ENCODE measurements at regions of chr20 and their contacts with region 1.

Region 1: DNA sequence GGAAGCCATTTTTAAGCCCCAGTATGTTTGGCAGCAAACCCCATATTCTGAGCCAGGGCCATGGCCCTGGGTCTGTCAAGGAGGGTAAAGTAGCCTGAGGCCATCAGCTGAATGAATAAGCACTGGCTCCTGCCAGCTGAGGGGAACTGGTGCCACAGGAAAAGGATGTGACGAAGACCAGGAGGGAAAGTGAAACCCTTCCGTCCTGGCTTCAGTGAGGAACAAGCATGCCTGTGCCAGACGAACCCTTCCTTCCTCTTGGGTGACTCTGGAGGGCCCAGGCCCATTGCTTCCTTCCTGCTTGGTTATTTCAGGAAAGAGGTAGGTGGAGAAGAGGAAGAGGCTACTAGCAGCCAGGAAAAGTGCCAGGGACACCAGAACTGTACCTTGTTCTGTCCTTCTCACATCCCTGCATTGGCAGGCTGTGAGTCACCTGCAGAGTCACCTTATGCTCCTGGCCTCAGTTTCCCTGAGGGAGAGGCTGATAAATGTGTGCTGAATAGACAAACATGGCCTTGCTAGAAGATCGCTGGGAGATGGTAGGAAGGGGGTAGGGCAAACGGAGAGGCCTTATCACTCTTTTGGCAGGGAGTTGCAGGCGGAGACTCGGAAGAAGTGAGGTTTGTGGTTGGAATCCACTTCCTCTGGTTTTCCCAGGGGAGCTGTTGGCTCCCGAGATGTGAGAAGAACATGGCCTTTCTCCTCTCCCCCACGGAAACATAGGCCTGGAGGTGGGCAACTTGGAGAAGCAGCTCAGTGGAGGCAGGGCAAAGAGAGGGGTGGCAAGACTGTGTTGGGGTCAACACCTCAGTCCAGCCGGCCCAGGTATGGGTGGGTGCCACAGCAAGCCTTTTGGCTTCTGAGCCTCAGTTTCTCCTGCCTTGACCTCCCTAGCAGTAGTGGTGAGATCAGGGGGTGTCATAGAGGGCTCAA is 37.4 kb downstream of the COX4I2 start:
- DNase-seq: peak; percentile 58 to 88
- ATAC-seq: peak; percentile 80 to 87 (median 82)
- H3K4me3 ChIP-seq: peak overlapping the region; percentile 58
- H3K4me3 Mint-ChIP-seq: peak overlapping the region; percentile 95
- H3K27ac ChIP-seq: peak overlapping the region; percentile 90
- H3K27ac Mint-ChIP-seq: peak overlapping the region; percentile 89 to 100
- H3K4me1 ChIP-seq: peaks cover 96% of the 10 kb centered on the region
- H3K4me1 Mint-ChIP-seq: peaks cover 84 to 88% of the 10 kb centered on the region in 2 donors
- H3K27me3 ChIP-seq: no peaks in the 10 kb centered on the region
- H3K27me3 Mint-ChIP-seq: no peaks in the 10 kb centered on the region
- CTCF ChIP-seq: no peak

Region 2: DNA sequence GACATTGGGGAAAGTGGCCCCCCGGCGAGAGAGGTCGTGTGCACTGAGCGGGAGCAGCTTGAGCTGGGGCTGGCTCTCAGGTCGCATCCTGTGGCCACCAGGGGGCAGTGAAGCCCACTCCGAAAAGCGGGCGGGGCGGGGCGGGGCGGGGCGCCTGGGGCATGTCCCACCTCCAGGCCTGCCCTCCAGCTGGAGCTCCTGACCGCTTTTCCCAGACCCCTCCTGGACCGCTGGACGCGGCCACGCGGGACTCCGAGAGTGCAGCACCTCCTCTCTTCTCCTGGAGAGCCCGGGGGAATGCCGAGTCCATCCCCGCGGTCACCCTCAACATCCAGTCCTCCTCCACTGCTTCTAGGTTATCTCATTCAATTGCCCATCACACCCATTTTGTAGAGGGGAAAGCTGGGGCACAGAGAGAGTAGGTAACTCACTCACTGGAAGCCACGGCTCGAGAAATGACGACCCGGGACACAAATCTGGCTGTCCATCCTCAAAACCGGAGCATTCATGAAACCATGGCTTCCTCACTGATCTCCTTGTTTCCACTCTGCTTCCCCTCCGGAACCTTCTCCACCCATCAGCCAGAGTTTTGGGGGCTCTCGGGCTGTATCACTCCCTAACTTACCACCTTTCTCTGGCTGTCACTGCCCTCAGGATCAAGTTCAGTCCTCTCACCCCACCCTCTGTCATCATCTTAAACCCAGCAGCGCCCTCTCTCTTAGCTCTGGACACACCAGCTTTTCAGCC is 13.4 kb before region 1 on chr20:
- intact Hi-C with region 1: loop called (anchors 1 kb)
- DNase-seq: peak; percentile 77 to 90
- ATAC-seq: peak; percentile 79 to 91 (median 85)
- H3K4me3 ChIP-seq: peak overlapping the region; percentile 35
- H3K4me3 Mint-ChIP-seq: peak overlapping the region; percentile 93
- H3K27ac ChIP-seq: peak overlapping the region; percentile 66
- H3K27ac Mint-ChIP-seq: peak overlapping the region; percentile 89 to 100
- H3K4me1 ChIP-seq: peaks cover 51% of the 10 kb centered on the region
- H3K4me1 Mint-ChIP-seq: peaks cover 48 to 57% of the 10 kb centered on the region in 2 donors
- H3K27me3 ChIP-seq: no peaks in the 10 kb centered on the region
- H3K27me3 Mint-ChIP-seq: no peaks in the 10 kb centered on the region
- CTCF ChIP-seq: peak; percentile 64

Region 3: DNA sequence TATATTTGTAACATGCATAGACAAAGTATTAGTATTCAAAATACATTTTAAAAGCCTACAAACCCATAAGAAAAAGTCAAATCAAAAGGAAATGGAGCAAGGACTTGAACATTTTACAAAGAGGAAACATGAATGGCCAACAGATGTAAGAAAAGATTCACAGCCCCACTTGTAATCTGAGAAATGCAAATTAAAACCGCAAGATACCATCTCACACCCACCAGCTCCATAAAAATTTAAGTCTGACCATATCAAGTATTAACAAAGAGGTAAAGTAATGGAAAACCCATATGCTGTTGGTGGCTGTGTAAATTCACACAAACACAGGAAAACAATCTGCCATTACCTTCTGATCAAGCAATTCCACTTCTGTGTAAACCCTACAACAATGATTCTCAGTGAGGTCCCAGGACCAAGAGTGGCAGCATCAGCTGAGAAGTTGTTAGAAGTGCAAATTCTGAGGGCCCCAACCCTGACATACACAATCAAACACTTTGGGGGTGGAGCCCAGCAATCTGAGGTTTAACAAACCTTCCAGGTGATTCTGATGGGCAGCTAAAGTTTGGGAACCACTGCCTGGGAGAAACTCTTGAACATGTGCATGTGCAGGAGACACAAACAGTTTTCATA is 16.6 kb after region 1 on chr20:
- intact Hi-C with region 1: loop called (anchors 2 kb)
- DNase-seq: no peak
- ATAC-seq: peak; percentile 50 to 59 (median 56)
- H3K4me3 ChIP-seq: no peak overlapping the region
- H3K4me3 Mint-ChIP-seq: peak overlapping the region; percentile 64
- H3K27ac ChIP-seq: peak overlapping the region; percentile 26
- H3K27ac Mint-ChIP-seq: peak overlapping the region; percentile 79 to 89
- H3K4me1 ChIP-seq: peaks cover 65% of the 10 kb centered on the region
- H3K4me1 Mint-ChIP-seq: peaks cover 64 to 79% of the 10 kb centered on the region in 2 donors
- H3K27me3 ChIP-seq: no peaks in the 10 kb centered on the region
- H3K27me3 Mint-ChIP-seq: no peaks in the 10 kb centered on the region
- CTCF ChIP-seq: no peak

Measured in natural killer cell (primary cell).